ENCODE measurements at regions of chrX and their contacts with region 1.

Region 1: GRCh38 chrX:11724122-11725017 is 33.7 kb upstream of the MSL3 start:
- DNase-seq: no peak
- H3K4me3 ChIP-seq: no peak overlapping the region
- H3K27ac ChIP-seq: no peak overlapping the region
- H3K4me1 ChIP-seq: no peaks in the 10 kb centered on the region
- H3K27me3 ChIP-seq: no peaks in the 10 kb centered on the region
- CTCF ChIP-seq: peak; percentile 61 to 80 (median 65)
- EP300 ChIP-seq: no peak
- POLR2A ChIP-seq: no peak

Region 2: GRCh38 chrX:11558972-11559371 is 165.4 kb before region 1 on chrX:
- intact Hi-C with region 1: no loop called
- DNase-seq: no peak
- H3K4me3 ChIP-seq: no peak overlapping the region
- H3K27ac ChIP-seq: no peak overlapping the region
- H3K4me1 ChIP-seq: peaks cover 0 to 31% (median 2%) of the 10 kb centered on the region in 4 donors
- H3K27me3 ChIP-seq: no peaks in the 10 kb centered on the region
- CTCF ChIP-seq: no peak
- EP300 ChIP-seq: no peak
- POLR2A ChIP-seq: no peak

Region 3: DNA sequence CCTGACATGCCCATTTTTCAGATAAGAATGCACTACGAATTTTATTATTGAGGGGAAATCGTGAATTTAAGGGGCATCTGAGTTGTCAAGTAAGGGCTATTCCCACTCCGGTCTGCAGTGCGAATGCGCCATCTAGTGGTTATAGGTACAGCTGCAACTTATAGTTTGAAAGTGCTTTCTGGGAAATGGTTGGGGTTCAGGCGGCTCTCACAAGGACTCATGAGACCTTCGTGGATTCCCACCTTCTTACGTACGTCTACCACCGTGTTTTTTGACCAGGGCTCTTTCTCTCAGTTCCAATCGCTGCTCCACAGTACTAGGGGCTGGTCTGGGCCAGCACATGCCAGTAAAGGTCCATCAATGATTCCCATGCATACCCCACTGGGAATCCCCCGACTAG is 46.0 kb after region 1 on chrX:
- intact Hi-C with region 1: loop called (anchors 5 kb)
- DNase-seq: no peak
- H3K4me3 ChIP-seq: no peak overlapping the region
- H3K27ac ChIP-seq: no peak overlapping the region
- H3K4me1 ChIP-seq: no peaks in the 10 kb centered on the region
- H3K27me3 ChIP-seq: no peaks in the 10 kb centered on the region
- CTCF ChIP-seq: peak; percentile 37 to 70 (median 53)
- EP300 ChIP-seq: no peak
- POLR2A ChIP-seq: no peak